Activated naive CD4-positive, alpha-beta T cell treated with anti-CD3 and anti-CD28 coated beads for 36 hours (primary cell): ENCODE measurements at regions of chr18 and their contacts with region 1.

Region 1: DNA sequence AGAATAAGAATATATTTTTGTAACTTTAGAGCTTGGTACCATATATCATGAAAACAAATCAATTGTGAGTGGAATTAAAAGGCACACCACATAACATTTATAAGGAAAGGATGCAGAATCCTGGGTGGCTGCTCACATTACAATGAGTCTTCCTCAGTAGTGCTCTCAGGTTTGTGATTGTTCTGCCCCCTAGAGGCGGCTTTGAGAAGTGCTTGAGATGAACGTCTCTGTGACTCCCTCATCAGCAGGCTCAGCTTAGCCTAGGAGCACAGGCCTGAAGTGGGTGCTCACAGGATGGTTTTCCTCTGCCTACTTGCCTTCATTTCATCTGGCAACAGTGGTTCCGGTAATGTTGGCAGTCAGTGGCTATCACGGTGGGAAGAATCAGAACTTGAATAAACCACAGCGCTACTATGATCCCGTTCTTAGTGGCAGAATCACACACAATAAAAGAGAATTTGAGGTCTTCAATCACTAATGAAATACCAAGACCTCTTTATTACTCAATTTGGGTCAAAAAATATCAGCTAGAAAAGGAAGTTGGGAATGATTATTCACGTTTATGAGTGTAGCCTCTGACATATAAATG is 38.1 kb upstream of the B4GALT6 start:
- DNase-seq: peak; percentile 92
- H3K4me3 Mint-ChIP-seq: no peak overlapping the region
- H3K27ac Mint-ChIP-seq: no peak overlapping the region
- H3K4me1 Mint-ChIP-seq: peaks cover 7% of the 10 kb centered on the region
- H3K27me3 Mint-ChIP-seq: peaks cover 31% of the 10 kb centered on the region

Region 2: DNA sequence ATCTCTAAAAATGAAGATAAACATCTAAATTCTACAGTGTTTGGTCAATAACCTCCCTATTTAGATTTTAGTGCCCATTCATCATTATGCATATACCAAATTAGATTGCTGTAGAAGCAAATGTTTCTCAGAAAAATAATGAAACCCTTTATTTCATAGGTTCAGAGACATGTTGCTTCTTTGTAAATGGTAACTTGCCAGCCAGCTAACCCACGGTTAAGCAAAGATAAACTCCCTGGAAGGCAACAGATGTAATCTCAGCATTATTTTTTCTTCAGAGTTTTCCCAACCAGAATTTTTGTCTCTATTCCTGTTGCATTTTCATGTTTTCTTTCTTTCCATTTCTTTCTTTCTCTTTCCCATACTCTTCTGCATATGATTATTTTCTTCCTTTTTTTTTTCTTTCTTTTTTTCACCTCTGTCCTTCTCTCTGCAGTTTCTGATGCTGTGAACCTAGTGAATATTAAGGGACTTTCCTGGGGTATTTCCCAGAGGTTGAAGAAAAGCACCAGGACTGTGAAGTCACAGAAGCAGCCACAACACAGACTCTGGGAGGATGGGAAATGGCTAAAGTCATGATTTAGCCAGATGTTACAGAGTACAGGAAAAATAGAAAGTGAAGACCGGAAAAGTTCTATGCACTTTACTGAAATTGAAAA is 454.5 kb before region 1 on chr18:
- CTCF ChIA-PET with region 1: no interaction called
- intact Hi-C with region 1: loop called (anchors 10 kb)
- DNase-seq: no peak
- H3K4me3 Mint-ChIP-seq: no peak overlapping the region
- H3K27ac Mint-ChIP-seq: no peak overlapping the region
- H3K4me1 Mint-ChIP-seq: peaks cover 8% of the 10 kb centered on the region
- H3K27me3 Mint-ChIP-seq: no peaks in the 10 kb centered on the region

Region 3: GRCh38 chr18:31497837-31498573 is 224.5 kb before region 1 on chr18 and contains the start of gene DSG2:
- CTCF ChIA-PET with region 1: no interaction called
- intact Hi-C with region 1: loop called (anchors 2 kb)
- DNase-seq: peak; percentile 39
- H3K4me3 Mint-ChIP-seq: peak within 1 kb of the TSS; percentile 73
- H3K27ac Mint-ChIP-seq: no peak within 1 kb of the TSS
- H3K4me1 Mint-ChIP-seq: peaks cover 6% of the 10 kb centered on the region
- H3K27me3 Mint-ChIP-seq: peaks cover 39% of the 10 kb centered on the region
- total RNA-seq, gene DSG2: 0.45 to 0.49 TPM

Region 4: GRCh38 chr18:31626409-31626808 is 96.1 kb before region 1 on chr18:
- CTCF ChIA-PET with region 1: interaction called, 3 read pairs
- intact Hi-C with region 1: loop called (anchors 2 kb)
- DNase-seq: no peak
- H3K4me3 Mint-ChIP-seq: no peak overlapping the region
- H3K27ac Mint-ChIP-seq: no peak overlapping the region
- H3K4me1 Mint-ChIP-seq: no peaks in the 10 kb centered on the region
- H3K27me3 Mint-ChIP-seq: no peaks in the 10 kb centered on the region

Region 5: GRCh38 chr18:31707815-31708214 is 14.6 kb before region 1 on chr18:
- CTCF ChIA-PET with region 1: interaction called, 14 read pairs
- intact Hi-C with region 1: no loop called
- DNase-seq: no peak
- H3K4me3 Mint-ChIP-seq: no peak overlapping the region
- H3K27ac Mint-ChIP-seq: no peak overlapping the region
- H3K4me1 Mint-ChIP-seq: peaks cover 2% of the 10 kb centered on the region
- H3K27me3 Mint-ChIP-seq: no peaks in the 10 kb centered on the region